ENCODE measurements at regions of chr1 and their contacts with region 1.

Region 1: GRCh38 chr1:8941906-8942305 is 3.8 kb upstream of the CA6 start:
- DNase-seq: no peak
- H3K4me3 Mint-ChIP-seq: no peak overlapping the region
- H3K27ac Mint-ChIP-seq: peak overlapping the region; percentile 55
- H3K4me1 Mint-ChIP-seq: peaks cover 69% of the 10 kb centered on the region
- H3K27me3 Mint-ChIP-seq: no peaks in the 10 kb centered on the region

Region 2: GRCh38 chr1:8962812-8963530 is 21.1 kb after region 1 on chr1:
- intact Hi-C with region 1: loop called (anchors 1 kb)
- DNase-seq: peak; percentile 36
- H3K4me3 Mint-ChIP-seq: no peak overlapping the region
- H3K27ac Mint-ChIP-seq: peak overlapping the region; percentile 15
- H3K4me1 Mint-ChIP-seq: peaks cover 48% of the 10 kb centered on the region
- H3K27me3 Mint-ChIP-seq: no peaks in the 10 kb centered on the region

Region 3: DNA sequence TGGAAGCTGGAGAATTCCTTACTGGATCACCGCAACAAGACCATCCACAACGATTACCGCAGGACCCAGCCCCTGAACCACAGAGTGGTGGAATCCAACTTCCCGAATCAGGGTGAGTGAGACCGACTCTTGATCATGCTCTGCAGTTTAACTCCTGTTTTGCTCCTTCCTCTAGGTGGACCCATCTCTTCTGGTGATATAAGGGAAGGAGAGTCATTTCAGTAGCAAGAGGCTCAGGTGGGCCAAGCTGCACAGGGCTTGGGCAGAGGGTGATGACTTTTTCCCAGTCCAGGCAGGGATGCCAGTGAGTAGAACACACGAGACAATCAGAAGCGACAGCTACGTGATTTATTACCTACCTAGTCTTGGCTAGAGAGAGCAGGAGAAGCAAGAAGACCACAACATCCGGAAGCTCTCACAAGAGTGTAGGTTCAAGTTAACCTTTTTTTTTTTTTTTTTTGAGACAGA is 29.0 kb after region 1 on chr1:
- intact Hi-C with region 1: loop called (anchors 2 kb)
- DNase-seq: peak; percentile 45
- H3K4me3 Mint-ChIP-seq: peak overlapping the region; percentile 90
- H3K27ac Mint-ChIP-seq: peak overlapping the region; percentile 93
- H3K4me1 Mint-ChIP-seq: peaks cover 41% of the 10 kb centered on the region
- H3K27me3 Mint-ChIP-seq: no peaks in the 10 kb centered on the region

Measured in activated T-helper 2 cell treated with anti-CD3 and anti-CD28 coated beads, Interferon-gamma antibody, Interleukin-2, Interleukin-4, amounts not matched to agents 10 μg/mL and 5 μg/mL and 100 μg/mL, durations not matched to agents 14 hours and 24 hours and 36 hours (primary cell).